MCF 10A (cell line): ENCODE measurements at regions of chr2 and their contacts with region 1.

Region 1: DNA sequence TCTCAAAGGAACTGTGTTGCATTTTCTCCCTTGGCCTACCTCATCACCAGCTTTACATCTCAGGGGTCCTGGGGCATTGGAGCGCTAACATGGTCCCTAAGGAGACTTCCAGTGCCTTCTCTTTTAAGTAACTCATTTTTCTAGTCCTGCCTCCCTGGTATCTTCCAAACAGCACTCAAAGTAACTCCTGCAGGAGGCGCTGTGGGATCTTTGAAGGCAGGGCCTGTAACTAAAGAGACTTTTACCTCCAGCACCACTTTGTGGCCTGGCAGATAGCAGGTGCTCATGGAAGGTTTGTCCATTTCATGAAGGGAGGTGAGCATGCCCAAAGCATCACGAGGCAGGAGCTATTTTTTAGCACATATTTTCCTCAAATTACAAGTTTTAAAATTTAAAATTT is 411.0 kb upstream of the GYPC start:
- DNase-seq: peak; percentile 63
- H3K4me3 Mint-ChIP-seq: no peak overlapping the region
- H3K27ac Mint-ChIP-seq: no peak overlapping the region
- H3K4me1 Mint-ChIP-seq: no peaks in the 10 kb centered on the region
- H3K27me3 Mint-ChIP-seq: peaks cover 10% of the 10 kb centered on the region
- CTCF ChIP-seq: peak; percentile 39

Region 2: DNA sequence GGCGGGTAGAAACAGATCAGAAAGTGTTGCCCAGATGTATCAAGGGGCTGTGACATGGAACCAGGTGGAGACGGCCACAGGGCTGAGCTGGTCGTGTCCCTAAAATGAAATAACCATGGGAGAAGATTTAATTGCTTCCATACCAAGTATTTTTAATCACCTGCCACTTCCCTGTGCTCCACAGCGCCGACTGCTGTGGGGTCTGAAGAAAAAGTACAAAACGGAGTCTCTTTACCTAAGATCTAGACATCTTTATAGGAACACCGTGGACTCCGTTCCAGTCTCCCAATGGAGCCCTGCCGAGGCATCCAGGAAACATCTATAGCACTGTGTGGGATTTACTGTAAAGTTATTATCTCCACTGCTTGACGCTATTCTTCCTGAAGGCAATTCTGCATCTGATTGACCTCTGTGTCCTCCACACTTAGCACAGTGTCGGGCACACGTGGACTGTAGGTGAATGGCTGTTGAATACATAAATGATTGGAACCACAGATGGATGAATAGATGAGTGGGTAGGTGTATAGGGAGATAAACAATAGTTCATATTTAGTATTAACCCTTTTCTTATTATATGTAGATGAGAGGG is 389.4 kb after region 1 on chr2:
- CTCF ChIA-PET with region 1: no interaction called
- POLR2A ChIA-PET with region 1: no interaction called
- intact Hi-C with region 1: loop called (anchors 1 kb)
- DNase-seq: peak; percentile 22
- H3K4me3 Mint-ChIP-seq: no peak overlapping the region
- H3K27ac Mint-ChIP-seq: no peak overlapping the region
- H3K4me1 Mint-ChIP-seq: peaks cover 5% of the 10 kb centered on the region
- H3K27me3 Mint-ChIP-seq: peaks cover 62% of the 10 kb centered on the region
- CTCF ChIP-seq: peak; percentile 48

Region 3: DNA sequence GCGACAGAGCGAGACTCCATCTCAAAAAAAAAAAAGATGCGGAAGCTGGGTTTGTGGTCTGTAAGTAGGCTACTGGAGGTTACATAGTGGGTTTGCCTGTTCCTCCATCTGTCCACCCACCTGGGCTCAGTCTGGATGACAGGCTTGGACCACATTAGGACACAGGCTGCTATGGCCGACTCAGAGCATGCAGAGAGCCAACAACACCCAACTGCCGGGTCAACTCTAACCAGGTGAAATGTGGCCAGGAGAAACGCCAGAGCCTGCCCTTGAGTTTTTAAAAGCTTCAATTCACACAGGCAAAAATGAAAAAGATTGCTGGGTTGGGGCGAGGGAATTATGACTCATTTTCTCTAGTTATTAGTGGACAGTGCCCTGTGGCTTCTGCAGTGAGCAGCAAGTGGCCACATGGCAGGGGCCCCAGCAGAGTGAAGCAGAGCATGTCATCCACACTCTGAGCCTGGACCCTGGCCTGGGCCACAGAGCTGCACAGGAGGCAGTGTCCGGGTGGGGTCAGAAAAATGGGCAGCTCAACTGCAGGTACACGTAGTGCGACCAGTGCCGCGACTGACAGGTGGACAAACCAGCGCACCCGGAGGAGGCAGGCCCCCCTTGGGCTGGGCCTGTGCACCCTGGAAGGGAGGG is 794.6 kb after region 1 on chr2:
- CTCF ChIA-PET with region 1: no interaction called
- POLR2A ChIA-PET with region 1: no interaction called
- intact Hi-C with region 1: loop called (anchors 5 kb)
- DNase-seq: no peak
- H3K4me3 Mint-ChIP-seq: no peak overlapping the region
- H3K27ac Mint-ChIP-seq: no peak overlapping the region
- H3K4me1 Mint-ChIP-seq: peaks cover 7% of the 10 kb centered on the region
- H3K27me3 Mint-ChIP-seq: no peaks in the 10 kb centered on the region
- CTCF ChIP-seq: no peak